ENCODE measurements at regions of chr18 and their contacts with region 1.

Region 1: DNA sequence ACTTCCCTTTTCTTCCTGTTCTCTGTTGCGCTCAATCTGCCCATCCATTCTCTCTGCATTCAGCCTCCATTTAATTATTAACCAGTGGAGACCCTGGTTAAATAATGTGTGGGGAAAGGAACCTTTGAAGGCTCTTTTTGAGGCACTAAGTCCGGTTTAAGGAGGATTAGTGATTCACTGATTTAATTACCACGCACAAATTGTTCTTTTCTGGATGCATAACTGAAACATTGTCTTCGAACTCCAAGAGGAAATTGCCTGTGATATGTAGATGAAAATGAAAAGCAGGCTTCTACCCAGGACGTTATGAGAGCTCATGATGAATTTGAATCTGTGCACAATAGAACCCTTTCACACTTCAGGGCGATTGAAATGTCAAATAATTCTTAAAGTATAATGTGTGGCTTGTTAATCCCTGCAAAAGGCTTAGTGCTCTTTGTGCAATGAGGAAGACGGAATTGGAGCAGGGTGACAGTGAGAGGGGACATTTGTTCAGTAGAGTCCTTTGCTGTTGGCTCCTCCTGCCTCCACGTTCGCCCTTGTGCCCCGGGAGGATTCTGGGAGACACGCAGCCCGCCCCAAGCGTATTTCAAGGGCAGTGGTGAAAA is 51.1 kb upstream of the ZNF236 start:
- DNase-seq: peak; percentile 73
- ATAC-seq: peak; percentile 89
- H3K4me3 ChIP-seq: peak overlapping the region in 2 of 3 experiments; percentile 20 to 22; a peak in 2 of 6 replicates
- H3K27ac ChIP-seq: peak overlapping the region; percentile 37
- H3K4me1 ChIP-seq: peaks cover 31% of the 10 kb centered on the region
- H3K27me3 ChIP-seq: no peaks in the 10 kb centered on the region; a peak in 1 of 5 replicates
- CTCF ChIP-seq: no peak
- EP300 ChIP-seq: peak in 1 of 2 experiments; percentile 48; a peak in 1 of 4 replicates
- POLR2A ChIP-seq: no peak
- RAD21 ChIP-seq: no peak

Region 2: GRCh38 chr18:76709659-76710645 is 61.3 kb before region 1 on chr18:
- CTCF ChIA-PET with region 1: no interaction called
- POLR2A ChIA-PET with region 1: no interaction called
- in situ Hi-C with region 1: no loop called
- intact Hi-C with region 1: no loop called
- DNase-seq: peak; percentile 33
- ATAC-seq: peak; percentile 82
- H3K4me3 ChIP-seq: peak overlapping the region in 1 of 3 experiments; percentile 27; a peak in 1 of 6 replicates
- H3K27ac ChIP-seq: no peak overlapping the region
- H3K4me1 ChIP-seq: no peaks in the 10 kb centered on the region
- H3K27me3 ChIP-seq: peaks cover 4 to 54% of the 10 kb centered on the region in 2 experiments
- CTCF ChIP-seq: peak; percentile 88
- EP300 ChIP-seq: no peak
- POLR2A ChIP-seq: no peak
- RAD21 ChIP-seq: peak; percentile 88

Region 3: DNA sequence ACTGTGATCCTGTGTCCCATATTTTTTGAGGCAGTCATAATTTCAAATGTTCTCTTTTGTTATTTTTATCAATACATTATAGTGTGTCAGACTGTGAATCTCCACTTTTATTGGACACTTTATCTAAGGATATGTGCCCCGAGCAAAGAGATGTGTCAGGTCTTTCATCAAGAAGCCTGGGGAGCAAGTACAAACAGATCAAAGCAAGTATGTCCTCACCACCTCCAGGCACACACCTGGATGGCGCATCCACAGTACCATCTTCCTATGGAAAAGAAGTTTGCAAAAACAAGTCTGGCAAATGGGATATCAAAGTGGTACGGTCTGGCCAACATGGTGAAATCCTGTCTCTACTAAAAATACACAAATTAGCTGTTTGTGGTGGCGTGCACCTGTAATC is 29.9 kb before region 1 on chr18:
- CTCF ChIA-PET with region 1: no interaction called
- POLR2A ChIA-PET with region 1: no interaction called
- in situ Hi-C with region 1: no loop called
- intact Hi-C with region 1: loop called (anchors 2 kb)
- DNase-seq: no peak
- ATAC-seq: no peak
- H3K4me3 ChIP-seq: no peak overlapping the region
- H3K27ac ChIP-seq: no peak overlapping the region
- H3K4me1 ChIP-seq: no peaks in the 10 kb centered on the region
- H3K27me3 ChIP-seq: peaks cover under 1 to 2% of the 10 kb centered on the region in 2 experiments; a peak in 3 of 5 replicates
- CTCF ChIP-seq: no peak
- EP300 ChIP-seq: no peak
- POLR2A ChIP-seq: no peak
- RAD21 ChIP-seq: no peak

Region 4: GRCh38 chr18:76892832-76893231 is 121.5 kb after region 1 on chr18:
- CTCF ChIA-PET with region 1: no interaction called
- POLR2A ChIA-PET with region 1: no interaction called
- in situ Hi-C with region 1: no loop called
- intact Hi-C with region 1: no loop called
- DNase-seq: no peak
- ATAC-seq: no peak
- H3K4me3 ChIP-seq: no peak overlapping the region
- H3K27ac ChIP-seq: no peak overlapping the region
- H3K4me1 ChIP-seq: no peaks in the 10 kb centered on the region
- H3K27me3 ChIP-seq: no peaks in the 10 kb centered on the region
- CTCF ChIP-seq: no peak
- EP300 ChIP-seq: no peak
- POLR2A ChIP-seq: no peak
- RAD21 ChIP-seq: no peak

Region 5: GRCh38 chr18:77004555-77005380 is 233.5 kb after region 1 on chr18:
- CTCF ChIA-PET with region 1: no interaction called
- POLR2A ChIA-PET with region 1: no interaction called
- in situ Hi-C with region 1: no loop called
- intact Hi-C with region 1: no loop called
- DNase-seq: no peak
- ATAC-seq: no peak
- H3K4me3 ChIP-seq: no peak overlapping the region
- H3K27ac ChIP-seq: no peak overlapping the region
- H3K4me1 ChIP-seq: peaks cover 12% of the 10 kb centered on the region
- H3K27me3 ChIP-seq: no peaks in the 10 kb centered on the region; a peak in 1 of 5 replicates
- CTCF ChIP-seq: no peak
- EP300 ChIP-seq: no peak
- POLR2A ChIP-seq: no peak
- RAD21 ChIP-seq: no peak

Measured in HepG2 (cell line).